Caco-2 (cell line): ENCODE measurements at regions of chr19 and their contacts with region 1.

Region 1: DNA sequence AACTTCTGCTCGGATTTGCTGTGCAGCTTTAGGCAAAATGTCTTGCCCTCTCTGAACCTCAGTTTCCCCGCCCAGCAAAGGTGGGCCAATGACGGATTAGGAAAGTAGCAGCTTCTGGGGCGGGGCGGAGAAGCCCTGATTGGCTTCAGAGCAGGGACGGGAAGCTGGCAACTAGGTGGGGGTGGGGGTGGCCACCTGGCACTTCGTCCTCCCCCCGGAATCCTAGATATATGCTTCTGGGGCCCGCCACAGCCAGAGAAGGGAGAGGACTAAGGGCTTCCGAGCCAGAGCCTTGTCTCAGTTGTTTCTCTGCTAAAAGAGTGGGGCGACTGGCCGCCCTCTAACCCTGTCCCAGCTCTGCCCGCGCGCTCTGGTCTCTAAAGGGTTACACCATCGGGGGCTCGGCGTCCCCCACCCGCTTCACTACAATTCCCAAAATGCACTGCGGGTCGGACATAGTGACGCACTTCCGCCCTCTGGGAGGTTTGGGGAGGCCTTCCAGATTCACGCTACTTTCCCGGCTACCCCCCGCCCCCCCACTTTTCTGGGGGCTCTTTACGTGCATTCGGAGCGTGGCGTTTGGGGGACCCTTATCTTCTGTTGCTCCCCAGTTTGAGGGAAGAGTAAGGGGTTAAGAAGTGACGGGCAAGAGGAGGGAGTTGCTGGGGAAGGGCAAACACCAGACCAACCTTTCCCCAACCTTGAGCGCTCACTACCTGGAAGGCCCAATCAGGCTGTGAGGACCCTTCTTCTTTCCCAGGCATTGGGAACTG is 672 bp upstream of the IRF2BP1 start:
- DNase-seq: peak; percentile 93 to 94
- H3K4me3 ChIP-seq: peak overlapping the region; percentile 84
- H3K4me3 Mint-ChIP-seq: peak overlapping the region; percentile 93
- H3K27ac Mint-ChIP-seq: peak overlapping the region; percentile 95
- H3K4me1 ChIP-seq: peaks cover 13% of the 10 kb centered on the region
- H3K4me1 Mint-ChIP-seq: peaks cover 12% of the 10 kb centered on the region
- H3K27me3 ChIP-seq: no peaks in the 10 kb centered on the region
- H3K27me3 Mint-ChIP-seq: no peaks in the 10 kb centered on the region
- CTCF ChIP-seq: no peak

Region 2: DNA sequence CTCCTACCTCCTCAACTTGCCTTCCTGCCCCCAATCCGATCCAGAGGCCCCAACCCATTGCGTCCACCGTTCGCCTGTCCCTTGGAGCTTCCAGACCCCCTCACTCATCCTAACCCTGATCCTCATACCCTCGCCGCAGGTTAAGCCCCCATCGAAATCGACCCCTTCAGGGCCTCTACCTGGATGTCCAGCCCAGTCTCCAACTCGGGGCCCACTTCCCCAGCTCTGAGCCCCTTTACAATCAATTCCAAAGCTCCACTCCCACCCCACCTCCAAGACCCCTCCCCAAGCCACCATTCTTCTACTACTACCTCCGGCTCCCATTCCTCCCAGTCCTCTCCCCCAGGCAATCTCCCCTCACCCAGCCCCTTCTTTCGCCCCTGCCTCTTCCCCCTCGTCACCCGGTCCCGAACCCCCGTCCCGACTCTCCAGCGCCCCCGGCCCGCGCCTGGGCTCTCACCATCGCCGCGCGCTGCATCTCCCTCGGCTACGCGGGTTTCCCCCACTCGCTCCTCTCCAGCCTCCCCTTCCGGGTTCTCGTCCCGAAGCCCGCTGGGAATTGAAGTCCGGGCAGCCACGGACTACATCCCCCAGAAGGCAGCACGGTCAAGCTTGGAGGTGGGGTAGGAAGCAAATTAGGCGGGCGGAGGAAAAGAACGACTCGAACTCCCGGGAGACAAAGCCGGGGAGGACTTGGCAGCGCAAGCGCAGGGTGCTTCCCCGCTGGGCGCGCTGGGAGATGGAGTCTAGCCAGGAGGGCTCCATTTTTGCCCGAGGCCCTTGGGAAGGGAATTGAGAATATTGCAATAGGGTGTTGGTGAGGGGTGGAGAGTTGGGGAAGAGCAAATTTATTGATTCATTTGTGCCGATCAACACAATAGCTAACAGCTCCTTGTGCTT is 156.0 kb before region 1 on chr19 and contains the start of gene FBXO46:
- CTCF ChIA-PET with region 1: no interaction called
- POLR2A ChIA-PET with region 1: interaction called, 16 read pairs
- intact Hi-C with region 1: no loop called
- DNase-seq: peak; percentile 97 to 99
- H3K4me3 ChIP-seq: peak within 1 kb of the TSS; percentile 57
- H3K4me3 Mint-ChIP-seq: peak within 1 kb of the TSS; percentile 86
- H3K27ac Mint-ChIP-seq: peak within 1 kb of the TSS; percentile 73
- H3K4me1 ChIP-seq: peaks cover under 1% of the 10 kb centered on the region
- H3K4me1 Mint-ChIP-seq: peaks cover 8% of the 10 kb centered on the region
- H3K27me3 ChIP-seq: no peaks in the 10 kb centered on the region
- H3K27me3 Mint-ChIP-seq: no peaks in the 10 kb centered on the region
- CTCF ChIP-seq: peak in 1 of 2 experiments; percentile 44
- total RNA-seq, gene FBXO46: 31.0 and 37.0 TPM in 2 replicates

Region 3: DNA sequence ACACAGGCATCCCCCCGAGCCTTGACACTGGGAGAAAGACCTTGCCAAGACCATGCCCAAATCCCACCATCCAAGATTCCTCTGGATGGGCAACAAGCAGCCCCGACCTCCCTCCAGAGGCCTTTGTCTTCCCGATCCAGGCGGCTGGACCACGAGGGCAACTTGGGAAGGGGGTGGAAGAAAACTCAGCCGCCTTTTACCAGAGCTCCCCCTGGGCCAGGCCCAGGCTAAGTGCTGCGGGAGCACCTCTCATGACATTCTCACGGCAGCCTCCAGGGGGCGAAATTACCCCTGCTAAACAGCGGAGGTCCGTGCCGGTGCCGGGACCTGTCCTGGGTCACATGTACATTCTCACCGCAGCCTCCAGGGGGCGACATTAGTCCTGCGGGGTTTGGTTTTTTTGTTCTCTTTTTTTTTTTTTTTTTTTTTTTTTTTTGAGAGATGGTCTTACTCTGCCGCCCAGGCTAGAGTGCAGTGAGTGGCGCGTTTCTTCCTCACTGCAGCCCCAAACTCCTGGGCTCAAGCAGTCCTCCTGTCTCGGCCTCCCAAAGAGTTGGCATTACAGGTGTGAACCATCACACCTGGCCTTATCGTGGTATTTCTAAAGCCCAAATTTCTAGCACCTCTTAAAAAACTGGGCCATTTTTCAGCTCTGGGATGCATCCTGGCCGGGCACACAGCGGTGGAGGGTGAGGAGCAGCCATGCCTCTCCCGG is 69.4 kb before region 1 on chr19:
- CTCF ChIA-PET with region 1: interaction called, 46 read pairs
- POLR2A ChIA-PET with region 1: interaction called, 5 read pairs
- intact Hi-C with region 1: loop called (anchors 1 kb)
- DNase-seq: peak; percentile 96 to 98
- H3K4me3 ChIP-seq: no peak overlapping the region
- H3K4me3 Mint-ChIP-seq: no peak overlapping the region
- H3K27ac Mint-ChIP-seq: no peak overlapping the region
- H3K4me1 ChIP-seq: peaks cover 6% of the 10 kb centered on the region; the same call in 1 of the 2 replicates
- H3K4me1 Mint-ChIP-seq: peaks cover 14% of the 10 kb centered on the region
- H3K27me3 ChIP-seq: no peaks in the 10 kb centered on the region
- H3K27me3 Mint-ChIP-seq: no peaks in the 10 kb centered on the region
- CTCF ChIP-seq: peak; percentile 97 to 99

Region 4: DNA sequence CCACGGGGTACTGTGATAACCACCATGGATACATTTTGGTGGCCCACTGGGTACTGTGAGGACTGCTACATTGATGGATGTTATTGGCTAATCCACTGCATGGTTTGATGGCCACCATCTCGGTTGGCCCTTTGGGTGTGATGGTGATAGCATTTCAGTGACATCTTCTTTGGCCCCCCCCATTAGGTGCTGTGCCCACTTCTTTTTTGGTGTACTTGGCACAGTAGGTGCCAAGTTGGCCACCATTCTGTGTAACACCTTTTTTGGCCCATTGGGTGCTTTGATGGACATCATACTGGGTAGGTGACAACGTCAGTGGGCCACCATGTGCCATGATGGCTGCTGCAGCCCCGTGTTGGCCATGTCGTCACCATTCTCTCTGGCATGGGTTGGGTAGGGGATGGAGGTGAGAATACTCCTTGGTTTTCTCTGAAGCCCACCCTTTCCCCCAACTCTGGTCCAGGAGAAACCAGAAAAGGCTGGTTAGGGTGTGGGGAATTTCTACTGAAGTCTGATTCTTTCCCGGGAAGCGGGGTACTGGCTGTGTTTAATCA is 13.3 kb before region 1 on chr19:
- CTCF ChIA-PET with region 1: interaction called, 5 read pairs
- POLR2A ChIA-PET with region 1: interaction called, 9 read pairs
- intact Hi-C with region 1: loop called (anchors 1 kb)
- DNase-seq: no peak
- H3K4me3 ChIP-seq: no peak overlapping the region
- H3K4me3 Mint-ChIP-seq: no peak overlapping the region
- H3K27ac Mint-ChIP-seq: no peak overlapping the region
- H3K4me1 ChIP-seq: peaks cover 38% of the 10 kb centered on the region
- H3K4me1 Mint-ChIP-seq: peaks cover 26% of the 10 kb centered on the region
- H3K27me3 ChIP-seq: no peaks in the 10 kb centered on the region
- H3K27me3 Mint-ChIP-seq: no peaks in the 10 kb centered on the region
- CTCF ChIP-seq: no peak

Region 5: GRCh38 chr19:45902651-45903625 is 16.3 kb after region 1 on chr19:
- CTCF ChIA-PET with region 1: interaction called, 6 read pairs
- POLR2A ChIA-PET with region 1: interaction called, 16 read pairs
- intact Hi-C with region 1: no loop called
- DNase-seq: peak; percentile 98 to 100
- H3K4me3 ChIP-seq: peak overlapping the region; percentile 92
- H3K4me3 Mint-ChIP-seq: peak overlapping the region; percentile 80
- H3K27ac Mint-ChIP-seq: peak overlapping the region; percentile 65
- H3K4me1 ChIP-seq: peaks cover 5% of the 10 kb centered on the region
- H3K4me1 Mint-ChIP-seq: no peaks in the 10 kb centered on the region
- H3K27me3 ChIP-seq: no peaks in the 10 kb centered on the region
- H3K27me3 Mint-ChIP-seq: no peaks in the 10 kb centered on the region
- CTCF ChIP-seq: no peak

Region 6: GRCh38 chr19:45927565-45928261 is 41.1 kb after region 1 on chr19:
- CTCF ChIA-PET with region 1: no interaction called
- POLR2A ChIA-PET with region 1: no interaction called
- intact Hi-C with region 1: no loop called
- DNase-seq: peak; percentile 96 to 97
- H3K4me3 ChIP-seq: peak overlapping the region; percentile 20
- H3K4me3 Mint-ChIP-seq: peak overlapping the region; percentile 68
- H3K27ac Mint-ChIP-seq: peak overlapping the region; percentile 13
- H3K4me1 ChIP-seq: peaks cover 5% of the 10 kb centered on the region
- H3K4me1 Mint-ChIP-seq: peaks cover 21% of the 10 kb centered on the region
- H3K27me3 ChIP-seq: no peaks in the 10 kb centered on the region
- H3K27me3 Mint-ChIP-seq: peaks cover 12% of the 10 kb centered on the region
- CTCF ChIP-seq: peak; percentile 13 to 20

Region 7: DNA sequence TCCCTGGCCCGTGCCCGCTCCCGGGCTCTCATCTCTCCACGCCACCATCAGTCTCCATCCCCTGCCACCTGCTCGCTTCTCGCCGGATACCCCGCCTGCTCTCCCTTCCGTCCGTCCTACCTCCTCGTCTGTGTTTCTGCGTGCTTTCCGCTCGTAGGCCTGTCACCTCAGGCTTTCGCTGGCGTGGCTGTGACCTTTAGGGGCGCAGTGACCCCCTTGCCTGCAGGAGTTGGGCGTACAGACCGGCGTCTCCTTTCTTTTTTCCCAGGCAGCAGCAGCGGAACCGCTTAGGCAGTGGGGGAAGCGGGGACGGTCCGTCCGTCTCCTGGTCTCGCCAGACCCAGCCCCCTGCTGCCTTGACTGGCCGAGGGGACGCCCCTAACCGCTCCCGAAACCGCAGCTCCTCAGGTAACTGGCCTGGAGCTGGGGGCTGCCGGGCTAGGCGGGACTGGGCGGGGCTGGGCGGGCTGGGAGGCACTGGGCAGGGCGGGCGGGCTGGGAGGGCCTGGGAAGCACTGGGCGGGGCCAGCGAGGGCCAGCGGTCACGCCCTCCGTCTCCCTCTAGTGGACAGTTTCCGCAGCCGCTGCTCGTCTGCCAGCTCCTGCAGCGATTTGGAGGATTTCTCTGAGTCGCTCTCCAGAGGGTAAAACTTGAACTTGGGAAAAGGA is 129.9 kb after region 1 on chr19:
- CTCF ChIA-PET with region 1: no interaction called
- POLR2A ChIA-PET with region 1: no interaction called
- intact Hi-C with region 1: loop called (anchors 5 kb)
- DNase-seq: peak; percentile 78 to 91
- H3K4me3 ChIP-seq: peak overlapping the region; percentile 57
- H3K4me3 Mint-ChIP-seq: peak overlapping the region; percentile 86
- H3K27ac Mint-ChIP-seq: no peak overlapping the region
- H3K4me1 ChIP-seq: peaks cover 20% of the 10 kb centered on the region
- H3K4me1 Mint-ChIP-seq: peaks cover 21% of the 10 kb centered on the region
- H3K27me3 ChIP-seq: no peaks in the 10 kb centered on the region; the same call in 1 of the 2 replicates
- H3K27me3 Mint-ChIP-seq: peaks cover 8% of the 10 kb centered on the region
- CTCF ChIP-seq: peak; percentile 93 to 95